ENCODE measurements at regions of chr15 and their contacts with region 1.

Region 1: GRCh38 chr15:77710637-77711036 is 77.9 kb upstream of the LINGO1 start:
- DNase-seq: no peak
- H3K4me3 ChIP-seq: no peak overlapping the region
- H3K27ac ChIP-seq: no peak overlapping the region
- H3K4me1 ChIP-seq: no peaks in the 10 kb centered on the region
- H3K27me3 ChIP-seq: no peaks in the 10 kb centered on the region
- CTCF ChIP-seq: no peak
- POLR2A ChIP-seq: no peak

Region 2: GRCh38 chr15:77722759-77723460 is 12.3 kb after region 1 on chr15:
- CTCF ChIA-PET with region 1: no interaction called
- POLR2A ChIA-PET with region 1: no interaction called
- dilution Hi-C with region 1: no loop called
- intact Hi-C with region 1: no loop called
- DNase-seq: no peak
- H3K4me3 ChIP-seq: no peak overlapping the region
- H3K27ac ChIP-seq: no peak overlapping the region
- H3K4me1 ChIP-seq: no peaks in the 10 kb centered on the region
- H3K27me3 ChIP-seq: no peaks in the 10 kb centered on the region
- CTCF ChIP-seq: no peak
- POLR2A ChIP-seq: no peak

Region 3: GRCh38 chr15:77759896-77760592 is 49.4 kb after region 1 on chr15:
- CTCF ChIA-PET with region 1: no interaction called
- POLR2A ChIA-PET with region 1: no interaction called
- dilution Hi-C with region 1: no loop called
- intact Hi-C with region 1: loop called (anchors 5 kb)
- DNase-seq: no peak
- H3K4me3 ChIP-seq: no peak overlapping the region
- H3K27ac ChIP-seq: no peak overlapping the region
- H3K4me1 ChIP-seq: no peaks in the 10 kb centered on the region
- H3K27me3 ChIP-seq: no peaks in the 10 kb centered on the region
- CTCF ChIP-seq: no peak
- POLR2A ChIP-seq: no peak